Activated CD4-positive, alpha-beta memory T cell treated with anti-CD3 and anti-CD28 coated beads, Interleukin-2, amount 10 ng/mL, durations not matched to agents 7 days and 5 days (primary cell): ENCODE measurements at regions of chr2 and their contacts with region 1.

Region 1: DNA sequence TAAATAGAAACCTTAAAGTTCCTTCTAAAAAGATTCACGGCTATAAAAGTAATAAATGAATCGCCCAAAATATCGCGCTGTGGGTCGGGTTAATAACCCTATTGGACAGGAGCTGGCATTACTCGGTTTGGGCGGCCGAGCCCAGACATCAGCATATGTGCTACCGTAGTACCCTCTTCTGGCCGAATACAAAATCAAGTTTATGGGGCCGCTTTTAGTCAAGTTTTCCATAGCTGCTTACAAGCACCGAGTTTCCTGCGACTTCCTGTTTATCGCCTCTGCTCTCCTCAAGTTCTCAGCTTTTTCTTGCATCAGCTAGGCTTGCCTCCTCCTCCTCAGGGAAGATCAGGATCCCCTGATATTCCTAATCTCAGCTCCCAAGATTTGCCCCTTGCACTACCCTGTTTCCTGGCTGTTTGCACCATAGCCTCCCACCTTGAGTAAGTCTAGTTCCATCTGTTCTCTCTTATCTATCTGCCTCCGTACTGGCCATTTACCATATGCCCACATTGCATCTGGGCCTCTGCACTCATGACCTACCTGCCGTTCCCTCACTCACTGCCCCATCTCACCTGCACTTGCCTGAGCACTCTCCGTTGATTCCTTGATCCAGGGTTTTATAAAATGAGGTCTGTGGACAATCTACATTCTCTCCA is 56.1 kb downstream of the SLC35F5 start:
- DNase-seq: peak; percentile 63
- H3K4me3 Mint-ChIP-seq: peak overlapping the region; percentile 68
- H3K27ac Mint-ChIP-seq: peak overlapping the region; percentile 24
- H3K4me1 Mint-ChIP-seq: peaks cover 22% of the 10 kb centered on the region
- H3K27me3 Mint-ChIP-seq: no peaks in the 10 kb centered on the region

Region 2: DNA sequence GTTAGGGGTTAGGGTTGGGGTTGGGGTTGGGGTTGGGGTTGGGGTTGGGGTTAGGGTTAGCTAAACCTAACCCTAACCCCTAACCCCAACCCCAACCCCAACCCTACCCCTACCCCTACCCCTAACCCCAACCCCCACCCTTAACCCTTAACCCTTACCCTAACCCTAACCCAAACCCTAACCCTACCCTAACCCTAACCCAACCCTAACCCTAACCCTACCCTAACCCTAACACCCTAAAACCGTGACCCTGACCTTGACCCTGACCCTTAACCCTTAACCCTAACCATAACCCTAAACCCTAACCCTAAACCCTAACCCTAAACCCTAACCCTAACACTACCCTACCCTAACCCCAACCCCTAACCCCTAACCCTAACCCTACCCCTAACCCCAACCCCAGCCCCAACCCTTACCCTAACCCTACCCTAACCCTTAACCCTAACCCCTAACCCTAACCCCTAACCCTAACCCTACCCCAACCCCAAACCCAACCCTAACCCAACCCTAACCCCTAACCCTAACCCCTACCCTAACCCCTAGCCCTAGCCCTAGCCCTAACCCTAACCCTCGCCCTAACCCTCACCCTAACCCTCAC is 97.3 kb before region 1 on chr2:
- CTCF ChIA-PET with region 1: interaction called, 15 read pairs
- POLR2A ChIA-PET with region 1: no interaction called
- DNase-seq: no peak
- H3K4me3 Mint-ChIP-seq: peak overlapping the region; percentile 85
- H3K27ac Mint-ChIP-seq: peak overlapping the region; percentile 93
- H3K4me1 Mint-ChIP-seq: peaks cover 8% of the 10 kb centered on the region
- H3K27me3 Mint-ChIP-seq: no peaks in the 10 kb centered on the region